Activated T-helper 1 cell treated with anti-CD3 and anti-CD28 coated beads, Interleukin-12 subunit alpha, Interleukin-12 subunit beta, Interleukin-2, Interleukin-4 antibody, amounts not matched to agents 30 ng/mL and 10 ng/mL and 1 ng/mL, durations not matched to agents 14 hours and 24 hours and 36 hours (primary cell): ENCODE measurements at regions of chr2 and their contacts with region 1.

Region 1: GRCh38 chr2:60819155-60819862 is 62.1 kb upstream of the REL start:
- DNase-seq: peak; percentile 80
- H3K4me3 Mint-ChIP-seq: peak overlapping the region; percentile 20
- H3K27ac Mint-ChIP-seq: peak overlapping the region; percentile 91
- H3K4me1 Mint-ChIP-seq: peaks cover 44% of the 10 kb centered on the region
- H3K27me3 Mint-ChIP-seq: no peaks in the 10 kb centered on the region

Region 2: GRCh38 chr2:60756191-60757041 is 62.9 kb before region 1 on chr2 and contains the start of gene PAPOLG:
- intact Hi-C with region 1: loop called (anchors 1 kb)
- DNase-seq: peak; percentile 94
- H3K4me3 Mint-ChIP-seq: peak within 1 kb of the TSS; percentile 99
- H3K27ac Mint-ChIP-seq: peak within 1 kb of the TSS; percentile 99
- H3K4me1 Mint-ChIP-seq: peaks cover 31% of the 10 kb centered on the region
- H3K27me3 Mint-ChIP-seq: no peaks in the 10 kb centered on the region
- total RNA-seq, gene PAPOLG: 17.2 and 22.2 TPM in 2 replicates

Region 3: GRCh38 chr2:60844105-60844504 is 24.8 kb after region 1 on chr2:
- intact Hi-C with region 1: loop called (anchors 1 kb)
- DNase-seq: no peak
- H3K4me3 Mint-ChIP-seq: no peak overlapping the region
- H3K27ac Mint-ChIP-seq: no peak overlapping the region
- H3K4me1 Mint-ChIP-seq: peaks cover 17% of the 10 kb centered on the region
- H3K27me3 Mint-ChIP-seq: peaks cover 2% of the 10 kb centered on the region

Region 4: GRCh38 chr2:60899230-60899891 is 80.1 kb after region 1 on chr2:
- intact Hi-C with region 1: loop called (anchors 1 kb)
- DNase-seq: no peak
- H3K4me3 Mint-ChIP-seq: peak overlapping the region; percentile 54
- H3K27ac Mint-ChIP-seq: peak overlapping the region; percentile 95
- H3K4me1 Mint-ChIP-seq: peaks cover 35% of the 10 kb centered on the region
- H3K27me3 Mint-ChIP-seq: peaks cover 2% of the 10 kb centered on the region

Region 5: GRCh38 chr2:60998628-60999545 is 179.6 kb after region 1 on chr2:
- intact Hi-C with region 1: loop called (anchors 1 kb)
- DNase-seq: no peak
- H3K4me3 Mint-ChIP-seq: no peak overlapping the region
- H3K27ac Mint-ChIP-seq: no peak overlapping the region
- H3K4me1 Mint-ChIP-seq: no peaks in the 10 kb centered on the region
- H3K27me3 Mint-ChIP-seq: no peaks in the 10 kb centered on the region